PC-3 (cell line): ENCODE measurements at regions of chr5 and their contacts with region 1.

Region 1: DNA sequence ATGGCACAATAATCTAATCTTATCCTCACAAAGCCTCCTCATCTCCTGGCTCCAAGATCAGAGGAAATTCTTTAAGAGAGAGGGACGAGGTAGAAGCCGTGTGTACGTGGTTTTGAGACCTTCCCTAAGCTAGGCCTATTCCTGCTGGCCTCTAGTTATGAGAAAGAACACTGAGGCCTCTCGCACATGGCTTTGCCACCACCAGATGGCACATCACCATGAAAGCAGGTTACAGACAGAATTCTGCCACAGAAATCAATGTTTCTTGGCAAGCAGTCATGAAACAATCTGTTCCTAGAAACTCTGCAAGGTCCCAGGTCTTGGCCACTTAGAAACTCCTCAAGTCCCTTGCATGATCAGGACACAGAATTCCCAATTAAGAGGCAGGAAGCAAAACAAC is 268.2 kb upstream of the TAS2R1 start:
- DNase-seq: peak; percentile 85
- ATAC-seq: peak; percentile 64
- H3K4me3 ChIP-seq: no peak overlapping the region
- H3K27ac ChIP-seq: no peak overlapping the region
- H3K4me1 ChIP-seq: no peaks in the 10 kb centered on the region; the same call in 1 of the 2 replicates
- H3K27me3 ChIP-seq: no peaks in the 10 kb centered on the region
- CTCF ChIP-seq: peak; percentile 92; the same call in 1 of the 2 replicates

Region 2: GRCh38 chr5:9545992-9546851 is 352.1 kb before region 1 on chr5 and contains the start of gene SEMA5A:
- CTCF ChIA-PET with region 1: no interaction called
- POLR2A ChIA-PET with region 1: no interaction called
- intact Hi-C with region 1: no loop called
- DNase-seq: peak; percentile 69
- ATAC-seq: peak; percentile 54
- H3K4me3 ChIP-seq: peak within 1 kb of the TSS; percentile 76
- H3K27ac ChIP-seq: no peak within 1 kb of the TSS
- H3K4me1 ChIP-seq: peaks cover 9% of the 10 kb centered on the region; the same call in 1 of the 2 replicates
- H3K27me3 ChIP-seq: no peaks in the 10 kb centered on the region
- CTCF ChIP-seq: 0 out of 2 replicates have a peak, but pooled peaks have one; percentile 13
- total RNA-seq, gene SEMA5A: 2.6 and 4.4 TPM in 2 replicates

Region 3: GRCh38 chr5:10030210-10030831 is 132.0 kb after region 1 on chr5:
- CTCF ChIA-PET with region 1: no interaction called
- POLR2A ChIA-PET with region 1: no interaction called
- intact Hi-C with region 1: loop called (anchors 2 kb)
- DNase-seq: peak; percentile 76
- ATAC-seq: no peak
- H3K4me3 ChIP-seq: no peak overlapping the region
- H3K27ac ChIP-seq: no peak overlapping the region
- H3K4me1 ChIP-seq: no peaks in the 10 kb centered on the region
- H3K27me3 ChIP-seq: no peaks in the 10 kb centered on the region
- CTCF ChIP-seq: peak; percentile 78

Region 4: GRCh38 chr5:10111571-10111970 is 213.3 kb after region 1 on chr5:
- CTCF ChIA-PET with region 1: no interaction called
- POLR2A ChIA-PET with region 1: no interaction called
- intact Hi-C with region 1: loop called (anchors 10 kb)
- DNase-seq: peak; percentile 92
- ATAC-seq: peak; percentile 98
- H3K4me3 ChIP-seq: no peak overlapping the region
- H3K27ac ChIP-seq: no peak overlapping the region
- H3K4me1 ChIP-seq: peaks cover 4% of the 10 kb centered on the region; the same call in 1 of the 2 replicates
- H3K27me3 ChIP-seq: no peaks in the 10 kb centered on the region
- CTCF ChIP-seq: peak; percentile 95

Region 5: GRCh38 chr5:10133830-10134229 is 235.5 kb after region 1 on chr5:
- CTCF ChIA-PET with region 1: no interaction called
- POLR2A ChIA-PET with region 1: no interaction called
- intact Hi-C with region 1: loop called (anchors 5 kb)
- DNase-seq: peak; percentile 49
- ATAC-seq: peak; percentile 50; the same call in 1 of the 2 replicates
- H3K4me3 ChIP-seq: no peak overlapping the region
- H3K27ac ChIP-seq: no peak overlapping the region
- H3K4me1 ChIP-seq: no peaks in the 10 kb centered on the region
- H3K27me3 ChIP-seq: no peaks in the 10 kb centered on the region
- CTCF ChIP-seq: peak; percentile 56

Region 6: GRCh38 chr5:10145923-10146401 is 247.6 kb after region 1 on chr5:
- CTCF ChIA-PET with region 1: no interaction called
- POLR2A ChIA-PET with region 1: no interaction called
- intact Hi-C with region 1: loop called (anchors 1 kb)
- DNase-seq: peak; percentile 87
- ATAC-seq: peak; percentile 91
- H3K4me3 ChIP-seq: no peak overlapping the region
- H3K27ac ChIP-seq: no peak overlapping the region
- H3K4me1 ChIP-seq: no peaks in the 10 kb centered on the region
- H3K27me3 ChIP-seq: no peaks in the 10 kb centered on the region
- CTCF ChIP-seq: peak; percentile 91